ENCODE measurements at regions of chr1 and their contacts with region 1.

Region 1: DNA sequence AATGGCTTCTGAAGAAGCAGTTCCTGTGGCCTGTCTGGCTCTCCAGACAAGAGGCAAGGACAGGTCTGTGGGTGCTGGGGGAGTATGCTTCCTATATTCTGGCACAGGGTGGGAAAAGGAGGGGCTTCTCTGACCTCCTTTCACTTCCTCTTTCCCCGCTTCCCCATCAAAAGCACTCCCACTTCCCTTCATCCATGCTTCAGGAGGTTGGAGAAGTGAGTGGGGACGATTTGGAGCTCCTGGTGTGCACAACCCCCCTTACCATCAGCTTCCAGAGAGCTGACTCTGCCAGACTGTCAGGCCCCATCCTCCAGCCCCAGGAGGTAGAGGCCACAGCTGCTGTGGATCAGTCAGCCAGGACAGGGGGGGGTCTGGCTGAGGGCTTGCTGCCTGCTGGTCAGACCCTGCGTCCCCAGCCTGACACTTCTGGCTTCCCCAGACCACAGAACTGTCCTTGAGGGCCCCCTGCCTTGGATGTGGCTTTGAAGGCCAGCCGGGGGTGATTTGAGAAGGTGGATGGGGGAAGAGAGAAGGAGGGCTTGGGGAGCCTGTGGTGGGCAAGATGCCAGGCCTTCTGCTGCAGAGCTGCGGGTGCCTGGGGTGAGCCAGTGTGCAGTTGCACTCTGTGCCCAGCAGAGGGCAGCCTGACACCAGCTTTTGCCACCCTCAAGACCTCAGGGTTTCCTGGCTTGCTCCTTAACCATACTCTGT is 21.5 kb upstream of the TMEM222 start:
- DNase-seq: peak; percentile 89
- H3K4me3 ChIP-seq: no peak overlapping the region
- H3K27ac ChIP-seq: no peak overlapping the region
- H3K4me1 ChIP-seq: no peaks in the 10 kb centered on the region
- H3K27me3 ChIP-seq: no peaks in the 10 kb centered on the region
- CTCF ChIP-seq: peak; percentile 95 to 98
- POLR2A ChIP-seq: no peak

Region 2: DNA sequence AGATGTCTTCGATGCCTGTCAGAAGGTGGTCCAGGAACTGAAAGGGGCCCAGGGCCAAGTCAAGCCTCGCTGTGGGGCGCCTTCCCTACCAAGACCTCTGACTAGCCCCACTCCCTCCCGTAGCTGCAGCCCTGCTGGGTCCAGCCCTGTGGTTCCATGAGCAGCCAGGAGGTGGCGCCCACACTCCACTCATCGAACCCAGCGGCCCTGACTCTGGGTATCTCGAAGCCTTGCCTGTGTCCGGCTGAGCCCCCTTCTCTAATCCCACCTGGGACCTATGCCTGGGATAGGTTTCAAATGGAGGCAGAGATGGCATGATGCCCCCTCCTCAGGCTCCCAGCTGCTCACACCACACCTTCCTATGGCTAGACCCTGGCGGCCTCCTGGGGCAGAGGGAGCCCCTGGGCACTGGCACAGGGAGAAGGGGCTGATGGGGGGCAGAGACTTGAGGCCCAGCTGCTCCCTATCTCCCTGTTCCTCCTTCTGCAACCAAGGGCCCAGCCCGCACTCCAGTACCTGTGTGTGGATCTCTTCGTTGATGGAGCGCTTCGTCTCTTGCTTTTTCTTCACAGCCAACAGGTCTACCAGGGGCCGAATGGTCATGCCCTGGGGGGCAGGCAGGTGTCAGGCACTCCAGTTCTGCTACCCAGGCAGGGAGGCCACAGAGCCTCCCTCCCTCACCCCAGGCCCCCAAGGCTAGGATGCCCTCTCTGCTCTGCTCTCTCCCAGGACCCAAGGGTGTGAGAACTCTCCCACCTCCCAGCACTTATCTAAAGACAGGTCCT is 197.6 kb before region 1 on chr1:
- CTCF ChIA-PET with region 1: interaction called, 25 read pairs
- POLR2A ChIA-PET with region 1: no interaction called
- dilution Hi-C with region 1: no loop called
- intact Hi-C with region 1: no loop called
- DNase-seq: peak; percentile 60
- H3K4me3 ChIP-seq: no peak overlapping the region
- H3K27ac ChIP-seq: no peak overlapping the region
- H3K4me1 ChIP-seq: no peaks in the 10 kb centered on the region
- H3K27me3 ChIP-seq: no peaks in the 10 kb centered on the region
- CTCF ChIP-seq: peak; percentile 93 to 98
- POLR2A ChIP-seq: no peak

Region 3: GRCh38 chr1:27332536-27333281 is 32.2 kb after region 1 on chr1:
- CTCF ChIA-PET with region 1: interaction called, 12 read pairs
- POLR2A ChIA-PET with region 1: no interaction called
- dilution Hi-C with region 1: no loop called
- intact Hi-C with region 1: no loop called
- DNase-seq: peak; percentile 12
- H3K4me3 ChIP-seq: no peak overlapping the region
- H3K27ac ChIP-seq: no peak overlapping the region
- H3K4me1 ChIP-seq: no peaks in the 10 kb centered on the region
- H3K27me3 ChIP-seq: no peaks in the 10 kb centered on the region
- CTCF ChIP-seq: peak; percentile 84 to 91
- POLR2A ChIP-seq: no peak

Region 4: DNA sequence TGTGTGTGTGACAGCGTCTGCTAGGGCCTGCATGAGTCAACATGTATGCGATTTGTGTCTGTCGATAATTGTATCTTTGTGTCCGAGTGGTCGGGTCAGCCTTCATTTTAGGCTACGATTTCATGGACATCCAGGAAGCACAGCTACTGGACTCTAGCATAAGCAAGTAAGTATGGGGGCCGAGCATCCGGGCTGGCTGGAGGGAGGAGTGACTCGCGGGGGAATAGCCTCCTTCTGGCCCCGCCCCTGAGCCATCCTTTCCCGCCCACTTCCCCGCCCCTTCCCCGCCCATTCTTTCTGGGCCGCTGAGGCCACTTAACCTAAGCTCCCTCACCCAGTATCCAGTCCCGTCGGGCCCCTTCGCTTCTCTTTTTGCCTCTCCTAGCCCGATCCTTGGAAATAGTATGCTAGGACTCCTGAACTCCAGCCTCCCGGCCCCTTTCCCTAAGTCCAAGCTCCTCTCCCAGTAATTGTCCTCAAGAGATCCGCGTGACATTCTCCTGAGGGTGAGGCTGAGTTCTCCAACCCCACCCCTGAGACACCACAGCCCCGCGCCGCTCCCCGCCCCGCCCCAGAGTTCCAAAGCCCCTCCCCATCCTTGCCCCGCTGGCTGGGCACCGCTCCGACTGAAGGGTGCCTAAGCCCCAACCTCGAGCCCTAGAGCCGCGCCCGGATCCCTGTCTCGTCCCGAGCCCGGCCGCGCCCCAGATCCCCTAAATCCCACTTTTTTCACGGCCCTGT is 65.0 kb after region 1 on chr1:
- CTCF ChIA-PET with region 1: interaction called, 16 read pairs
- POLR2A ChIA-PET with region 1: no interaction called
- dilution Hi-C with region 1: no loop called
- intact Hi-C with region 1: no loop called
- DNase-seq: peak; percentile 91
- H3K4me3 ChIP-seq: peak overlapping the region; percentile 62 to 81 (median 79)
- H3K27ac ChIP-seq: peak overlapping the region; percentile 85
- H3K4me1 ChIP-seq: peaks cover 15% of the 10 kb centered on the region
- H3K27me3 ChIP-seq: no peaks in the 10 kb centered on the region
- CTCF ChIP-seq: no peak
- POLR2A ChIP-seq: peak; percentile 41

Measured in endothelial cell of umbilical vein (primary cell).